ENCODE measurements at regions of chr1 and their contacts with region 1.

Region 1: DNA sequence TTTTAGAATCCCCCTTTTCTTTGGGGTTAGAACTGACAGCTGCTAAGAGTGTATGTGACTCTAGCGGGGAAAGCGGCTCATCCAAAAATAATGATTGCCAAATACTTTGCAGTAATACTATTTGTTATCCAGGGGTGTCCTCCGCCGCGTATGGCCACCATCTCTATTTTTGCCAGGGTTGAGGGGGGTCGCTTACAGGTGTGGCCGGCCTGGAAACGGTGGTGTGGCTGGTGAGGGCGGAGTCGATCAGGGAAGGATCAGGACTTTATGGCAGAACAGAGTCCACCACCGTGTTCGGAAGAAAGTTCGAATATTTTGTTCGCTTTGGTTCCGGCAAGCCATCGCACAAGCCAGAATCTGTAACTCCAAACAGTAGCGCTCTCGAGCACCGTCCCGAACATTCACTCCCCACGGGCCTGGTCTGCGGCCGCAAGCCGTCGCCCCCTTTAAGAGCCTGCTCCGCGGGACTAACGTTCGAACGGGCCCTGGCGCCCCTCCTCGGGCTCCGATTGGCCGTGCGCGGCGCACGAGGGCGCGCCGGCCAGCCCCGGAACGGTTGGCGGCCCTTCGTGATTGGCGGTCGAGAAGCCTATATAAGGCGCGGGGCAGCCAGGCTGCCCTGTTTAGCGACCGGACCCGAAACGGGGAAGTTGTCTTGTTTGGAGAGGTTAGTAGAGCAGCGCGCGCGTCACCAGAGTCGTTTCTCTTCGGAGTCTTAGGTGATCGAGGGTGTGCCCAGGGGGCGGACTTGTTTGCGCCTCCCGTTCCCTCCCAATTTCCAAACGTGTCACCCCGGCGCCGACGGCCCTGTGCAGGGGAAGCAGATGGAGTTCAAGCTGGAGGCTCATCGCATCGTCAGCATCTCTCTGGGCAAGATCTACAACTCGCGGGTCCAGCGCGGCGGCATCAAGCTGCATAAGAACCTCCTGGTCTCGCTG is at the start of gene IER5:
- DNase-seq: peak; percentile 97
- H3K4me3 ChIP-seq: peak within 1 kb of the TSS; percentile 87 to 93 (median 89)
- H3K27ac ChIP-seq: peak within 1 kb of the TSS; percentile 96
- H3K4me1 ChIP-seq: peaks cover 29% of the 10 kb centered on the region
- H3K27me3 ChIP-seq: no peaks in the 10 kb centered on the region
- CTCF ChIP-seq: no peak
- total RNA-seq, gene IER5: 16.3 to 37.5 TPM

Region 2: DNA sequence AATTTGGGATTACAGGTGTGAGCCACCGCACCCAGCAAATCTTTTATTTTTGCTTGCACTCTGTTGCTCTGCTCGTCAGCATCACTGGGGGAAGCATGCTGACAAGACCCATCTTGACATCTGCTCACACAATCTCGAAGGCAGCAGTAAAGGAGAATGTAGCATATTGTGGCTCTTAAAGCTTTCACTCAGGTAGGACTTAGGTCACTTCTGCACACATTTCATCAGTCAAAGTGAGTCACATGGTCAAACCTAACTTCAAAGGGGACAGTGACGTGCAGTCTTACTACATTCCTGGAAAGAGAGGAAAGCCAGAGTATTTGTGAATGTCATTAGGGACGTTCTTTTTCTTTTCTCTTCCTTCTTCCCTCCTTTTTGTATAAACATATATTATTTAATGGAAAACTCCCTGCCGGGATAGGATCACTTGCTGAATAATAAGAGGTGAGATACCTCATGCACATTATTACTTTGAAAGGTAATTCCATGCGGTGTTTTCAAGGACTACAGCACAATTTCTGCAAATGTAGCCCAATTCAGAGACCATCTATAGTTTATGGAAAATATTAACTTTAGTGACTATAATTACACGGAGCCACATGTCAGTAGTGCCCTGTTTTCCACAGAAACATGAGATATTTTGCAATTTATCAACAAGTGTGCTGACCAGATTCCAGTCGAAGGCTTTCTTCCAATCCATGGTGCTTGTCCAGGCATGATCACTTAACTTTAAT is 566.7 kb before region 1 on chr1:
- CTCF ChIA-PET with region 1: no interaction called
- dilution Hi-C with region 1: no loop called
- in situ Hi-C with region 1: no loop called
- intact Hi-C with region 1: loop called (anchors 5 kb)
- DNase-seq: peak; percentile 79
- H3K4me3 ChIP-seq: no peak overlapping the region
- H3K27ac ChIP-seq: peak overlapping the region; percentile 82
- H3K4me1 ChIP-seq: peaks cover 47% of the 10 kb centered on the region
- H3K27me3 ChIP-seq: no peaks in the 10 kb centered on the region
- CTCF ChIP-seq: no peak

Region 3: GRCh38 chr1:180881806-180882509 is 206.4 kb before region 1 on chr1:
- CTCF ChIA-PET with region 1: no interaction called
- dilution Hi-C with region 1: no loop called
- in situ Hi-C with region 1: no loop called
- intact Hi-C with region 1: loop called (anchors 1 kb)
- DNase-seq: peak; percentile 16
- H3K4me3 ChIP-seq: no peak overlapping the region
- H3K27ac ChIP-seq: no peak overlapping the region
- H3K4me1 ChIP-seq: no peaks in the 10 kb centered on the region
- H3K27me3 ChIP-seq: no peaks in the 10 kb centered on the region
- CTCF ChIP-seq: peak; percentile 33 to 44

Region 4: GRCh38 chr1:181099152-181100014 is 11.0 kb after region 1 on chr1:
- CTCF ChIA-PET with region 1: no interaction called
- dilution Hi-C with region 1: no loop called
- in situ Hi-C with region 1: no loop called
- intact Hi-C with region 1: loop called (anchors 1 kb)
- DNase-seq: peak; percentile 96
- H3K4me3 ChIP-seq: no peak overlapping the region
- H3K27ac ChIP-seq: peak overlapping the region; percentile 73
- H3K4me1 ChIP-seq: peaks cover 68% of the 10 kb centered on the region
- H3K27me3 ChIP-seq: no peaks in the 10 kb centered on the region
- CTCF ChIP-seq: no peak

Region 5: DNA sequence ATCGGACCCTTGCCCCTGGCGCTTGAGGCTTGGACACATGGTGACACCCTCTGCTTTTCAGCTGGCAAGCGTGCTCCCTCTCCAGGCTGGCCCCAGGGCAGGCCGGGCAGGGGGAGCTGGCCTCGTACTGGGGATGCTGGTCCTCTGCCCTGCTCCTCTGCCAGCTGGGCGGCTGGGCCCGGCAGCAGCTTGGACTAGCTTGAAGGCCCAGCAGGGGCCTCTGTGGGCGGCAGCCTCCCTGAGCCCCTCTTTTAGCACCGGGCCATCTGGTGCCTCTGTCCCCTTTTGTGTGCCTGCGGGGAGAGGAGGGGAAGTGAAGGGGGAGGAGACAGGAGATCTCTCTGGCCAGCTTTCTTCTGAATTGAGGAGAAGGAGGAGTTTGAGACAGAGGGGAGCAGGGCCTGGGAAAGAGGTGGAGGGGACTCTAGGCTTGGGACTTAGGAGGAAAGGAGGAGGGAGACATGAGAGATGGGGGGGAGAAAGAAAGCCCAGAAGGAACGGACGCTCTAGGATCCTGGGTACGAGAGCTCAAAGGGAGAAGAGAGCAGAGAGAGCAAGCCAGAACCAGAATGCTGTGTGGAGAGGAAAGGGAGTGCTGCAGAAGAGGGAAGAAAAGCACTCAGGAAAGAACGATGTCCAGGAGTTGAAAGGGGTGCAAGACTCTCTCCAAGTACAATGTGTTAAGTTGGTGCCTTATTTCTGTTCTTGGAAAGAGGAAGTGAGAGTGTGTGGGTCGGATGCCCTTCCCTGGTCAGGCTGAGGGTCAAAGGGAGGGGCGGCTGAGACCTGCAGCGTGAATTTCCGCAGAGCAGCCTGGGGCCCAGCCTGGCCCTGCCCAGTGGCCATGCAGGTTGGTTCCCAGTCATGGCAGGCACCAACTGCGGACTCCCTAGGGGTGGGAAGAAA is 40.5 kb after region 1 on chr1:
- CTCF ChIA-PET with region 1: no interaction called
- dilution Hi-C with region 1: loop called (anchors 5 kb)
- in situ Hi-C with region 1: no loop called
- intact Hi-C with region 1: no loop called
- DNase-seq: no peak
- H3K4me3 ChIP-seq: no peak overlapping the region
- H3K27ac ChIP-seq: no peak overlapping the region
- H3K4me1 ChIP-seq: peaks cover 9% of the 10 kb centered on the region
- H3K27me3 ChIP-seq: no peaks in the 10 kb centered on the region
- CTCF ChIP-seq: no peak

Region 6: DNA sequence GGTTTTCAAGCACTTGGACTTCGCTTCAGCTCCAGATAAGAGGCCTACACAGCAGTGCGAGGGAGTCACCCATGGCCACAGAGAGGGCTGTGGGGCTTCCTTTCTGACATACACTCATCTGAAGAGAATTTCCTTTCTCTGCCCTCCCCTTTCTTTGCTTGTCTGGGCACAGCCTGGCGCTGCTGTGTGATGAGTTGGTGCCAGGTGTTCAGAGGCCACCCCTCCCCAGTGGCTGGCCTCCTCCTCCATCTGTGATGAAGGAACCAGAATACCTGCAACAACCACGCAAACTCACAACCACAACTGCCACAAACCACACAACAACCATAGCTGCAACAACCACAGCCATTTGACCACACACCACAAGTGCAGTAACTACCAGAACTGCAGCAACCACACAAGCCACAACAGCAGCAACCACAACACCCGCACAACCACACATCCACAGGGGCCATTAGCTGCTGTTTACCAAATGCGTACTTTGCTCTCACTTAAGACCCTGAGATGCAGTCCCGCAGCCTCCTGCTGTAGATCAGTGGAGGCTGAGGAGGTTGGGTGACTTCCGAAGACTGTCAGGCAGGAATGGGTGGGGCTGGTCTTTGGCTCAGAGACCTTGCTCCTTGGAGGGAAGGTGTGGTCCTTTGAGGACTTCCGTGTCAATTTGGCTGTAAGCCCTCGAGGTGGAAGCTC is 71.2 kb after region 1 on chr1:
- CTCF ChIA-PET with region 1: no interaction called
- dilution Hi-C with region 1: no loop called
- in situ Hi-C with region 1: no loop called
- intact Hi-C with region 1: loop called (anchors 1 kb)
- DNase-seq: peak; percentile 97
- H3K4me3 ChIP-seq: no peak overlapping the region
- H3K27ac ChIP-seq: peak overlapping the region; percentile 65
- H3K4me1 ChIP-seq: peaks cover 22% of the 10 kb centered on the region
- H3K27me3 ChIP-seq: no peaks in the 10 kb centered on the region
- CTCF ChIP-seq: no peak